Adrenal gland (tissue), 19 donors: ENCODE measurements at regions of chr4 and their contacts with region 1.

Region 1: DNA sequence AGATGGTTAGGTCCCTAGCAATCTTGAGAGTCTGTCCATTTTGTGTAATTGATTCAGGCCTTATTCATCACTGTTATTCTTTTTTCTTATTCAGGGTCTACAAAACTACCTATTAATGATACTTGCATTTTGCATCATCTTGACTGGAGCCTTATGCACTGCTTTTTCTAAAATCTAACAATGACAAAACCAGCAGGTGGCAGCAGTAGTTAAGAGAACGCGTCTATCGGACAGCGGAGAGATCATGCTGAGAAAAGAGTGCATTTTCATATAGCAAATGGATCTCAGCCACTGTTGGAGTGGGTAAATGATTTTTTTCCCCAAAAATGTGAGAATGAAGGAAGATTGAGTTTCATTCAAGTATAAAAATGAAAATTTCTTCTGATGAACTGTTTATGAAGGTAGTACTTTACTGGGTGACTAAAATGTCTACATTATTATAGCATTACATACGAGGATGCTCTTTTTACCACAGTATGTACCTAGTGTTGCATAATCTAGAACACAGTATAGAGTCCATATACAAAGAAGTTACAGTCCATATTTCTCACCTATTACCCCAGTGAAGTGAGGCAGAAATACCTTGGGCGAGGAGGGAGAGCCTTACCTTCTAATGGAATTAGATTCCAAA is 43.2 kb downstream of the TMEM144 start:
- DNase-seq: peak; percentile 37 to 75 (median 61)
- H3K4me3 ChIP-seq: no peak overlapping the region
- H3K27ac ChIP-seq: no peak overlapping the region
- H3K4me1 ChIP-seq: peaks cover 0 to 2% of the 10 kb centered on the region in 2 donors
- H3K27me3 ChIP-seq: no peaks in the 10 kb centered on the region
- CTCF ChIP-seq: peak; percentile 34 to 66 (median 54)
- POLR2A ChIP-seq: no peak

Region 2: GRCh38 chr4:157983300-157983699 is 270.2 kb before region 1 on chr4:
- intact Hi-C with region 1: loop called in 1 of 2 experiments (anchors 10 kb)
- DNase-seq: no peak
- H3K4me3 ChIP-seq: no peak overlapping the region
- H3K27ac ChIP-seq: no peak overlapping the region
- H3K4me1 ChIP-seq: peaks cover 0 to 7% of the 10 kb centered on the region in 2 donors
- H3K27me3 ChIP-seq: no peaks in the 10 kb centered on the region
- CTCF ChIP-seq: no peak
- POLR2A ChIP-seq: no peak

Region 3: DNA sequence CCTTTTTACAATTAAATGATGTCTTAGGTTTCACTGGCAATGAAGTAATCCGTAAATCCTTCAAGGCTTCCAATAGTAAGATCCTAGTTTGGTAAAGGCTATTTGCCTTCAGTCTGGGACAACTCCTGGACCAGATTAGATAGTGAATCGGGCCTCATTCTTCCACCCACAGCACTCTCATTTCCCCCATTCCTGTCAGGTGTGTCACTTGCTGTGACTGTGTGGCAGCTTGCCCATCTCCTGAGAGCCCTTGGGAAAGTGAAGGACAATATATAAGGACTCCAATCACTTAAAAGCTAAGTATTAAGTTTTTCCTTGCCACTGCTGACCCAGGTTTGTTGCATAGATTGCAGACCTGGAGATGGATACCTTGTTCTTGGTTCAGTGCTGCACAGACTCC is 77.4 kb before region 1 on chr4:
- intact Hi-C with region 1: no loop called
- DNase-seq: peak in 6 of 7 donors; percentile 50 to 69 (median 58)
- H3K4me3 ChIP-seq: no peak overlapping the region
- H3K27ac ChIP-seq: no peak overlapping the region
- H3K4me1 ChIP-seq: peaks cover 22 to 39% of the 10 kb centered on the region in 2 donors
- H3K27me3 ChIP-seq: no peaks in the 10 kb centered on the region
- CTCF ChIP-seq: no peak
- POLR2A ChIP-seq: no peak

Region 4: DNA sequence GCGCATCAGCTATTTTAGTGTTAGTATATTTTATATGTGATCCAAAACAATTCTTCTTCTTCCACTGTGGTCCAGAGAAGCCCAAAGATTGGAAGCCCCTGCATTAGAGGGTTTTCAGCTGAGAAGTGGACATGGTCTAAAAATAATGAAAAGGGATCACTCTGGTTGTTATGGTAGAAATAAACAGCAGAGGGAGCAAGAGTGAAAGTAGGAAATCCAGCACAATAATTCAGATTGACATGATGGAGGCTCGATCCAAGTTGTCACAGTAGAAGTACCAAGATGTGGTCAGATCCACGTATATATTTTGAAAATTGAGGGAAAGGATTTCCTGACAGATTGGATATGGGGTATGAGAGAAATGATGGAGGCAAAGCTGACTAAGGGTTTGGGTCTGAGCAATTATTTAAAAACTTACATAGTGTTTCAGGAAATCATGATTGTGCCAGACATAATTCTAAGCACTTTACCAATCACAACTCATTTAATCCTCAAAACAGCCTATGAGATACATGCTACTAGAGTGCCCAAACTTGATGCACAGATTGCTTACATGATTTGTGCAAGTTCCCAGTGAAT is 60.2 kb before region 1 on chr4:
- intact Hi-C with region 1: loop called (anchors 10 kb)
- DNase-seq: no peak
- H3K4me3 ChIP-seq: no peak overlapping the region
- H3K27ac ChIP-seq: no peak overlapping the region
- H3K4me1 ChIP-seq: peaks cover 0 to 5% of the 10 kb centered on the region in 2 donors
- H3K27me3 ChIP-seq: no peaks in the 10 kb centered on the region
- CTCF ChIP-seq: peak; percentile 44 to 73 (median 65)
- POLR2A ChIP-seq: no peak

Region 5: GRCh38 chr4:159308566-159309340 is 1055.3 kb after region 1 on chr4:
- intact Hi-C with region 1: no loop called
- DNase-seq: no peak
- H3K4me3 ChIP-seq: no peak overlapping the region
- H3K27ac ChIP-seq: no peak overlapping the region
- H3K4me1 ChIP-seq: peaks cover 11 to 28% of the 10 kb centered on the region in 2 donors
- H3K27me3 ChIP-seq: no peaks in the 10 kb centered on the region
- CTCF ChIP-seq: no peak
- POLR2A ChIP-seq: no peak